ENCODE measurements at regions of chr6 and their contacts with region 1.

Region 1: GRCh38 chr6:15662326-15663129 is at the start of gene DTNBP1:
- DNase-seq: peak; percentile 94
- ATAC-seq: peak; percentile 73
- H3K4me3 Mint-ChIP-seq: peak within 1 kb of the TSS; percentile 87
- H3K27ac Mint-ChIP-seq: peak within 1 kb of the TSS; percentile 89
- H3K4me1 Mint-ChIP-seq: peaks cover 49% of the 10 kb centered on the region
- H3K27me3 Mint-ChIP-seq: no peaks in the 10 kb centered on the region
- CTCF ChIP-seq: no peak
- total RNA-seq, gene DTNBP1: 50.3 and 51.6 TPM in 2 replicates

Region 2: DNA sequence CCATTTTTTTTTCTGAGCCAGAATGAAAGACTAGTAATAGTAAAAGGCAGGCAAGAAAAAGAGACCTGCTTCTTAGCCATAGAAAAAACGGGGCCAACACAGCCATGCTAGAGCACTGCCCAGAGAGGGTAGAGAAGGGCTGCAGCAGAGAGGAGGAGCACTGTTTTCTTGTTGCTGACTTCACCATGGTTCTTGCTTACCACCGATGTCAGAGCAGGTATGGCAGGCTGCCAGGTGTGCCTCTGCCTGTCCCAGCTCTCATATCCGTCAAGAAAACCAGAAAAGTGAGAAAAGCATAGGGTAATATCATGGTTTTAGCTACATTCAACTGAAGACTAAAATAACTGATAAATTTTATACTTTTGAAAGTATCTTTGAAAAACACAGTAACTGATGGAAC is 60.4 kb before region 1 on chr6:
- CTCF ChIA-PET with region 1: no interaction called
- POLR2A ChIA-PET with region 1: no interaction called
- intact Hi-C with region 1: no loop called
- DNase-seq: no peak
- ATAC-seq: no peak
- H3K4me3 Mint-ChIP-seq: no peak overlapping the region
- H3K27ac Mint-ChIP-seq: no peak overlapping the region
- H3K4me1 Mint-ChIP-seq: peaks cover 20% of the 10 kb centered on the region
- H3K27me3 Mint-ChIP-seq: no peaks in the 10 kb centered on the region
- CTCF ChIP-seq: no peak

Region 3: GRCh38 chr6:15685619-15686018 is 23.1 kb after region 1 on chr6:
- CTCF ChIA-PET with region 1: no interaction called
- POLR2A ChIA-PET with region 1: interaction called, 10 read pairs
- intact Hi-C with region 1: no loop called
- DNase-seq: no peak
- ATAC-seq: no peak
- H3K4me3 Mint-ChIP-seq: no peak overlapping the region
- H3K27ac Mint-ChIP-seq: no peak overlapping the region
- H3K4me1 Mint-ChIP-seq: peaks cover 2% of the 10 kb centered on the region
- H3K27me3 Mint-ChIP-seq: no peaks in the 10 kb centered on the region
- CTCF ChIP-seq: no peak

Region 4: GRCh38 chr6:16849988-16850680 is 1187.6 kb after region 1 on chr6:
- CTCF ChIA-PET with region 1: no interaction called
- POLR2A ChIA-PET with region 1: interaction called, 12 read pairs
- intact Hi-C with region 1: no loop called
- DNase-seq: no peak
- ATAC-seq: no peak
- H3K4me3 Mint-ChIP-seq: no peak overlapping the region
- H3K27ac Mint-ChIP-seq: no peak overlapping the region
- H3K4me1 Mint-ChIP-seq: no peaks in the 10 kb centered on the region
- H3K27me3 Mint-ChIP-seq: peaks cover 16% of the 10 kb centered on the region
- CTCF ChIP-seq: no peak

Measured in activated B cell treated with CpG ODN at 0.5 μM for 24 hours (primary cell).